Activated CD4-positive, alpha-beta memory T cell treated with anti-CD3 and anti-CD28 coated beads, Interleukin-2, amount 10 ng/mL, durations not matched to agents 7 days and 5 days (primary cell): ENCODE measurements at regions of chr12 and their contacts with region 1.

Region 1: GRCh38 chr12:7933255-7933729 is 2.7 kb downstream of the SLC2A3 start:
- DNase-seq: peak; percentile 79
- H3K4me3 Mint-ChIP-seq: no peak overlapping the region
- H3K27ac Mint-ChIP-seq: no peak overlapping the region
- H3K4me1 Mint-ChIP-seq: peaks cover 37% of the 10 kb centered on the region
- H3K27me3 Mint-ChIP-seq: no peaks in the 10 kb centered on the region

Region 2: DNA sequence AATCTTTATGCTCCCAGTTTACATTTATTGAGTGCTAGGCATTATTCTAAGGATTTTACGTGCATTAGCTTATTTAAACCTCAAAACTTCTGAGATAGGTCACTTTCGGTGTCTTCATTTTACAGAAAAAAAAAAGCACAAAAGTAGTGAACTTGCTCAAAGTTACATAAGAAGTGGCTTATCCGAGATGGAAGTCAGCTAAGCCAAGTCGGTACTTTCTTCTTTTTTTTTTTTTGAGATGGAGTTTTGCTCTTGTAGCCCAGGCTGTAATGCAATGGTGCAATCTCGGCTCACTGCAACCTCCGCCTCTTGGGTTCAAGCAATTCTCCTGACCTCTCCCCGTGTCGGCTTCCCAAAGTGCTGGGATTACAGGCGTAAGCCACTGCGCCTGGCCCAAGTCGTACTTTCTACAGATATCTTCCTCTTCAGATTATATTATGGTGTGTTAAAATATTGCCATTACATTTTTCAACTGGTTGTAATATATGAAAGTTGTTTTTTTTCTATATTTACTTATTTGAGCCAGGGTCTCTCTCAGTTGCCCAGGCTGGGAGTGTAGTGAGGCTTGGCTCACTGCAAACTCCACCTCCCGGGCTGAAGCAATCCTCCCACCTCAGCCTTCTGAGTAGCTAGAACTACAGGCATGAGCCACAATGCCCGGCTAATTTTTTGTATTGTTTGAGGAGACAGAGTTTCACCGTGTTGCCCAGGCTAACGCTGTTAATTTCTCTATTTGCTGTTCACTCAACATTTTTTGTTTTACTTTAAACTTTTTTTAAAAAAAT is 213.2 kb before region 1 on chr12:
- CTCF ChIA-PET with region 1: no interaction called
- POLR2A ChIA-PET with region 1: no interaction called
- DNase-seq: no peak
- H3K4me3 Mint-ChIP-seq: no peak overlapping the region
- H3K27ac Mint-ChIP-seq: no peak overlapping the region
- H3K4me1 Mint-ChIP-seq: no peaks in the 10 kb centered on the region
- H3K27me3 Mint-ChIP-seq: peaks cover 14% of the 10 kb centered on the region

Region 3: GRCh38 chr12:7916936-7917335 is 16.4 kb before region 1 on chr12:
- CTCF ChIA-PET with region 1: interaction called, 6 read pairs
- POLR2A ChIA-PET with region 1: interaction called, 29 read pairs
- DNase-seq: no peak
- H3K4me3 Mint-ChIP-seq: no peak overlapping the region
- H3K27ac Mint-ChIP-seq: no peak overlapping the region
- H3K4me1 Mint-ChIP-seq: peaks cover 39% of the 10 kb centered on the region
- H3K27me3 Mint-ChIP-seq: no peaks in the 10 kb centered on the region

Region 4: DNA sequence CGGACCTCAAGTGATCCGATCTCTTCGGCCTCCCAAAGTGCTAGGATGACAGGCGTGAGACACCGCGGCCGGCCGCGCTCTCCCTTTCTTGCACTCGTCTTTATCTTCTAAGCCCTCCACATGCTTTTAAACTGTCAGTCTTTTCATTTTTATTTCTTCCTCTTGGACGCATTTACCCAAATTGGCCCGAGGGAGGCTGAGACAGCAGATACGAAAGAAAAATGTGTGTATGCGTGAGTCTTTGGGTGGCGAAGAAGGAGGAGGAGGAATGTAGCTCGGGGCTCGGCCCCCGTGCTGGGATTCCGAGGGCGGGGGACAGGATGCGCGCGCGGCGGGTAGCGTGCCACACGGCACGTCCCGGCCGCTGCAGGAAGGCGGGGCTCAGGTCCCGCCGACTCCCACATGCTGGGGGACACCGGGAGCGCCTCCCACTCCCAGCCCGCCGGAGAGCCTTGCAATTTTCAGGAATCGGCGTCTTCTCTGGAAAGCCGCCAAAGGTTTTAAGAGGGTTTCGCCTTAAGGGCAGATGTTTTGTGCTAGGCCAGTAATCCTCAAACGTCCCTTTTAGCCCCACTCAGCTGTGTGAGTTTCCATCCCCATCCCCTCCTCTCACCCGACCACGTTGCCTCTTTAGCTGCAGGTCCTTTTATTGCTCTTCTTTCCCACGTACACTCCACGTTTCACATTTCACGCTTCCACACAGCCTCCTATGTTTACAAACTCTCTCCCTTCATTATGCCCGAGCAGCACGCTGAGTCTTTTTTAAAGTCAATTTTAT is 37.4 kb after region 1 on chr12:
- CTCF ChIA-PET with region 1: interaction called, 346 read pairs
- POLR2A ChIA-PET with region 1: interaction called, 819 read pairs
- DNase-seq: peak; percentile 89
- H3K4me3 Mint-ChIP-seq: peak overlapping the region; percentile 84
- H3K27ac Mint-ChIP-seq: peak overlapping the region; percentile 100
- H3K4me1 Mint-ChIP-seq: peaks cover 39% of the 10 kb centered on the region
- H3K27me3 Mint-ChIP-seq: no peaks in the 10 kb centered on the region

Region 5: GRCh38 chr12:7995266-7995963 is 62.1 kb after region 1 on chr12:
- CTCF ChIA-PET with region 1: interaction called, 100 read pairs
- POLR2A ChIA-PET with region 1: interaction called, 106 read pairs
- DNase-seq: peak; percentile 84
- H3K4me3 Mint-ChIP-seq: no peak overlapping the region
- H3K27ac Mint-ChIP-seq: no peak overlapping the region
- H3K4me1 Mint-ChIP-seq: peaks cover 26% of the 10 kb centered on the region
- H3K27me3 Mint-ChIP-seq: no peaks in the 10 kb centered on the region

Region 6: DNA sequence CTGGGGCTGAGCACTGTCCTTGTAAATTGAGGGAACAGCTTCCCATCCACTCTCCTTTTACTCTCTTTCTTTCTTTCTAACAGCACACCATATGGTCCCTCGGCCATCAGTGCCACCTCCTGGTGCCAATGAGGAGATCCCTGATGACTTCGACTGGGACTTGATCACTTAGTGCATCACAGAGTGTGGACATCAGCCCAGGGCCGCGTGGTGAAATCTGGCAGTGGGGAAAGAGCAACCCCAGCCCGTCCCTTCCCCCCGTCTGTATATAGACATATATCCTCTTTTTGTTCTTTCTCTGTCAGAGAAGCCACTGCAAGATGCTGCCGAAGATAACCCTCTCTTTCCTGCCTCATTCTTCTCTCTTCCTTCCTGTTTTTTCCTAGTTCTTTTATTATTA is 119.4 kb after region 1 on chr12:
- CTCF ChIA-PET with region 1: no interaction called
- POLR2A ChIA-PET with region 1: no interaction called
- DNase-seq: no peak
- H3K4me3 Mint-ChIP-seq: no peak overlapping the region
- H3K27ac Mint-ChIP-seq: no peak overlapping the region
- H3K4me1 Mint-ChIP-seq: peaks cover 18% of the 10 kb centered on the region
- H3K27me3 Mint-ChIP-seq: no peaks in the 10 kb centered on the region

Region 7: GRCh38 chr12:8078398-8078797 is 145.1 kb after region 1 on chr12:
- CTCF ChIA-PET with region 1: interaction called, 18 read pairs
- POLR2A ChIA-PET with region 1: interaction called, 8 read pairs
- DNase-seq: peak; percentile 65
- H3K4me3 Mint-ChIP-seq: no peak overlapping the region
- H3K27ac Mint-ChIP-seq: no peak overlapping the region
- H3K4me1 Mint-ChIP-seq: peaks cover 41% of the 10 kb centered on the region
- H3K27me3 Mint-ChIP-seq: no peaks in the 10 kb centered on the region